ENCODE measurements at regions of chr14 and their contacts with region 1.

Region 1: DNA sequence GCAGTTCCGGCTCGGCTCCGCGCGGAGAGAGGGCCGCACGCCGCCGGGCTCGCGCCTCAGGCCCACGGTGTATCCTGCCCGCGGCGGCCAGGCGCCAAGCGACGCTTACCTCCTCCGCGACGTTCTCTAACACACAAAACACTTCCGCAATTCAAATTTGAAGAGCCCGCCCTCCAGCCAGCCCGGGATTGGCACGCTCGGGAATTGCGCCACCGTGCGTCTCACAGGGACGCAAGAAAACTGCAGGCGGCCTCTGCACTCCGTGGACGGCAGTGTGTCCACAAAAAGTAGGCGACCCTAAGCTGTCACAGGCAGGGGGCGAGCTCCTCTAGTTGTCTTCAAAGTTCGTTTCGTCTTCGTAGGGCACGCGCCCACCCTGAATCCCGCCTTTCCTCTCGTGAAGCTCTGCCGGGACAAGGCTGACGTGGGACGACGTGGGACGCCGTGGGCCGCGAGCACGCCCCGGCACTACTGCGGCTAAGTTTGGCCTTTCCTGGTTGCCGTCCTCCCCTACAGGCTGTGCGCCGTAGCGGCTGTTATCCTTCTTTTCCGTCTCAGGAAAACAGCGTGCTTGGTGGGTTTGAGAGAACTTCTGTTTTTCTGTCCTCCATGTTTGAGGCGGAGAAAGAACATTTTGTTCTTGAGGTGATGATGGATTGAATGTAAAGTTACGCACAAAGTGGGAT is at the start of gene MIS18BP1:
- DNase-seq: peak; percentile 97
- H3K4me3 Mint-ChIP-seq: peak within 1 kb of the TSS; percentile 88
- H3K27ac Mint-ChIP-seq: peak within 1 kb of the TSS; percentile 99
- H3K4me1 Mint-ChIP-seq: peaks cover 11% of the 10 kb centered on the region
- H3K27me3 Mint-ChIP-seq: no peaks in the 10 kb centered on the region
- CTCF ChIP-seq: peak; percentile 80
- total RNA-seq, gene MIS18BP1: 24.2 and 31.6 TPM in 2 replicates

Region 2: DNA sequence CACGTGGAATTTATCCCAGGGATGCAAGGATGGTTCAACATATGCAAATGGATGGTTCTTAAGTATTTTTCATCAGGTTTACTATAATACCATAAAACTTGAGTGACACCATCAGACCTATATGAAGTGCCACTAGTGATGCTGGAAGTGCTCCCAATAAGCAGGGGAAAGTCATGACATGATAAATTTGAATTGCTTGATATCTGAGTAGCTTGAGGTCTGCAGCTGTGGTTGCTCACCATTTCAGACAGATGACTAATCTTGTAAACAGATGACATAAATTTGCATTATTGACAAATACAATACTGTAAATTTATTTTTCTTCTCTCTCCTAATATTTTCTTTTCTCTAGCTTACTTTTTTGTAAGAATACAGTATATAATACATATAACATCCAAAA is 183.0 kb before region 1 on chr14:
- CTCF ChIA-PET with region 1: no interaction called
- POLR2A ChIA-PET with region 1: no interaction called
- intact Hi-C with region 1: no loop called
- DNase-seq: no peak
- H3K4me3 Mint-ChIP-seq: no peak overlapping the region
- H3K27ac Mint-ChIP-seq: no peak overlapping the region
- H3K4me1 Mint-ChIP-seq: no peaks in the 10 kb centered on the region
- H3K27me3 Mint-ChIP-seq: no peaks in the 10 kb centered on the region
- CTCF ChIP-seq: no peak

Region 3: DNA sequence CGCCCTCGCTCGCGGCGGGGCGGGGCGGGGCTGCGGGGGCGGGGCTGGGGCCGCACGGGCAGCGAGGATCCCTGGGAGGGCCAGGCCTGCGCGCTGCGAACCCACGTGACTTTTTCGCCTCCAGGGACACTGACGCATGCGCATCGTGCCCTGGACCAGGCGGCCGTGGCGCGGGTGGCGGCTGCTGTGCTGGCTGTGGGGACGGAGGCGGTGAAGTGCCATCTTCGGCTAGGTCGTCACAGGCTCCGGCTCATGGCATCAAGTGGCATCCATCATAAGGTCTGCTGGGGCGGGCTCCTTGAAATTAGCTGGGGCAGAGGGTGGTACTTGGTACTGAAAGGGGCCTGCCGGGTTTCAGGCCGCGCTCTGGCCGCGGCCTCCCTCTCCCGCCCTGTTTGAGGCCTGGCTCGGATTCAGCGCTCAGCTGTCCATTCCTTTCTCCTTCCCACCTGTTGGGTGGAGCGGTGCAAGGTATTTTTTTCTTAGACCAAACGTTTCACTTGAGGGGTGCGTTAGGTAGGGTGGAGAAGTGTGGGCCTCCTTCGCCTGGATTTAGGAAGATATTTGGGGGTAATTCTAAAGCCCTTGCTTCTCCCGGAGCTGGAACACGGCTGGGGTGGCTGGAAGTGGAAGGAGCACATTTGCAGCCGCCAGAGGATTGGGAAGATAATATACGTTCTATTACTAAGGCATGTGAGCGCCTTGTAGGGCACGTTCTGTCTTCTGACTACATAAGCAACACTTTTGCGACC is 169.1 kb before region 1 on chr14 and contains the start of gene PRPF39:
- CTCF ChIA-PET with region 1: interaction called, 3 read pairs
- POLR2A ChIA-PET with region 1: interaction called, 14 read pairs
- intact Hi-C with region 1: loop called (anchors 2 kb)
- DNase-seq: peak; percentile 93
- H3K4me3 Mint-ChIP-seq: peak within 1 kb of the TSS; percentile 97
- H3K27ac Mint-ChIP-seq: peak within 1 kb of the TSS; percentile 94
- H3K4me1 Mint-ChIP-seq: peaks cover 36% of the 10 kb centered on the region
- H3K27me3 Mint-ChIP-seq: no peaks in the 10 kb centered on the region
- CTCF ChIP-seq: no peak
- total RNA-seq, gene PRPF39: 36.7 and 41.4 TPM in 2 replicates

Region 4: DNA sequence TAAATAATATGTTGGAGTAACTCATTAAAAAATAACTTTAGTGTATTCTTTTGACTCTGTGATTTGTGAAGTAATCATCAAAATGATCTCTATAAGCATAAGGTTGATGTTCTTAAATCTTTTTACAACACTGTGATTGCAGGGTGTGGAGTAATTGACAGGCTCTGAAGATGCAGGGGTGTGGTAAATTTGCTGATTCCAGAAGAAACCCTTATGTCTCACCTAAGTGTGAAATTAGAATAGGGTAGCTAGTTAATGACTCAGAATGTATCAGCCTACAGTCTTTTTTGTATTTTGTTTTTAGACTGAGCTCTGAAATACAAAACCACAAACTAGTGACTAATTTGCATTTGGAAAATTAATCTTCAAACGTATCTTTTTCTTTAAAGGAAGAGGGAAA is 163.4 kb before region 1 on chr14:
- CTCF ChIA-PET with region 1: interaction called, 3 read pairs
- POLR2A ChIA-PET with region 1: interaction called, 14 read pairs
- intact Hi-C with region 1: loop called (anchors 2 kb)
- DNase-seq: peak; percentile 64
- H3K4me3 Mint-ChIP-seq: peak overlapping the region; percentile 7
- H3K27ac Mint-ChIP-seq: peak overlapping the region; percentile 28
- H3K4me1 Mint-ChIP-seq: peaks cover 51% of the 10 kb centered on the region
- H3K27me3 Mint-ChIP-seq: no peaks in the 10 kb centered on the region
- CTCF ChIP-seq: no peak

Region 5: DNA sequence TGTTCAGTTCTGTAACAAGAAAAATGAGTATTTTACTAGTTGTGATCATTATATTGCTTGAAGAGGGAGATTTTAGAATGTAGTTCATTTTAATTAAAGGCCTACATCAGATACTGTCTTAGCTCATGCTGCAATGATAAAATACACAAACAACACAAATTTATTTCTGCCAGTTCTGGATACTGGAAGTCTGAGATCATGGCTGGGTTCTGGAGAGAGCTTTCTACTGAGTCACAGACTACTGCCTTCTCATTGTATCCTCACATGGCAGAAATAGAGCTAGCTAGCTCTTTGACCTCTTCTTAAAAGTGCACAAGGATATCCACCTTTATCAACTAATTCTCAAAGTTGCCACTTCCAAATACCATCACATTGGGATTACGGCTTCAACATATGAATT is 54.0 kb before region 1 on chr14:
- CTCF ChIA-PET with region 1: interaction called, 6 read pairs
- POLR2A ChIA-PET with region 1: interaction called, 11 read pairs
- intact Hi-C with region 1: loop called (anchors 5 kb)
- DNase-seq: peak; percentile 17
- H3K4me3 Mint-ChIP-seq: no peak overlapping the region
- H3K27ac Mint-ChIP-seq: peak overlapping the region; percentile 47
- H3K4me1 Mint-ChIP-seq: peaks cover 21% of the 10 kb centered on the region
- H3K27me3 Mint-ChIP-seq: no peaks in the 10 kb centered on the region
- CTCF ChIP-seq: no peak

Region 6: GRCh38 chr14:45377166-45377565 is 124.0 kb after region 1 on chr14:
- CTCF ChIA-PET with region 1: no interaction called
- POLR2A ChIA-PET with region 1: no interaction called
- intact Hi-C with region 1: no loop called
- DNase-seq: no peak
- H3K4me3 Mint-ChIP-seq: no peak overlapping the region
- H3K27ac Mint-ChIP-seq: no peak overlapping the region
- H3K4me1 Mint-ChIP-seq: no peaks in the 10 kb centered on the region
- H3K27me3 Mint-ChIP-seq: no peaks in the 10 kb centered on the region
- CTCF ChIP-seq: no peak

Measured in MCF 10A (cell line).